ENCODE measurements at regions of chr5 and their contacts with region 1.

Region 1: GRCh38 chr5:37837414-37838032 is 2.3 kb downstream of the GDNF start:
- DNase-seq: peak in 5 of 9 donors; percentile 5 to 74 (median 8)
- ATAC-seq: no peak
- H3K4me3 ChIP-seq: no peak overlapping the region
- H3K4me3 Mint-ChIP-seq: peak overlapping the region; percentile 47 to 80 (median 68)
- H3K27ac ChIP-seq: no peak overlapping the region
- H3K27ac Mint-ChIP-seq: peak overlapping the region in 1 of 9 donors; percentile 5
- H3K4me1 ChIP-seq: peaks cover 0 to 4% of the 10 kb centered on the region in 2 donors
- H3K4me1 Mint-ChIP-seq: peaks cover 14 to 34% (median 29%) of the 10 kb centered on the region in 7 donors
- H3K27me3 ChIP-seq: peaks cover 5 to 12% of the 10 kb centered on the region in 2 donors
- H3K27me3 Mint-ChIP-seq: peaks cover 76 to 89% (median 81%) of the 10 kb centered on the region in 5 donors

Region 2: DNA sequence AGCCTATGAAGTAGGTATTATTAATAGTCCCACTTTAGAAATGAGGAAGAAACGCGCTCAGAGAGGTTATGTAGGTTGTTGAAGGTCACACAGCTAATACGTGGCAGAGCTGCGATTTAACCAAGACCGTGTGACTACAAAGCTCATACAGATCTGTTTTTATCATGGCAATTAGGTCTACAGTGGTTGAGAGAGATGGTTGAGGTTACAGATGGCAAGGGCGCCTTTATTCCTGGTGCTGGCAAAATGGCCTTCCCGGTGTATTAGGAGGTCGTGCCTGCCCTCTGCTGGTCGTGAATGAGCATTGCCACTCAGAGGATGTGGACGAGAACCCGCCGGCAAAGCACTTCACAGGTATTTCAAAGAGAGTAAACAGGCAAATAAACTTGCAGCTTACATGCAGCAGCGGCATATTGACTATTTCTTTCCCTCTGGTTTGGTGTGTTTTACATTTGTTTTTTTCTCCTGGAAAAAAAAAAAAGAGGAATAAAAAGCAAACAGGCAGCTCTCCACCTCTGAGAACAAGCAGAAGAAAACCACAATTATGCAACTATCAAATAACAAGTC is 355.6 kb after region 1 on chr5:
- CTCF ChIA-PET with region 1: no interaction called
- POLR2A ChIA-PET with region 1: no interaction called
- intact Hi-C with region 1: loop called (anchors 1 to 2 kb)
- DNase-seq: peak in 6 of 9 donors; percentile 25 to 57 (median 32)
- ATAC-seq: peak; percentile 73
- H3K4me3 ChIP-seq: no peak overlapping the region
- H3K4me3 Mint-ChIP-seq: peak overlapping the region in 1 of 10 donors; percentile 2
- H3K27ac ChIP-seq: no peak overlapping the region
- H3K27ac Mint-ChIP-seq: no peak overlapping the region
- H3K4me1 ChIP-seq: no peaks in the 10 kb centered on the region
- H3K4me1 Mint-ChIP-seq: peaks cover 0 to 5% (median 0%) of the 10 kb centered on the region in 7 donors
- H3K27me3 ChIP-seq: no peaks in the 10 kb centered on the region
- H3K27me3 Mint-ChIP-seq: peaks cover 24 to 35% (median 30%) of the 10 kb centered on the region in 5 donors

Measured in naive thymus-derived CD4-positive, alpha-beta T cell (primary cell).